ENCODE measurements at regions of chr12 and their contacts with region 1.

Region 1: GRCh38 chr12:92078167-92079053 is 67.2 kb downstream of the BTG1 start:
- DNase-seq: no peak
- H3K4me3 Mint-ChIP-seq: no peak overlapping the region
- H3K27ac Mint-ChIP-seq: peak overlapping the region; percentile 76
- H3K4me1 Mint-ChIP-seq: peaks cover 50% of the 10 kb centered on the region
- H3K27me3 Mint-ChIP-seq: no peaks in the 10 kb centered on the region

Region 2: GRCh38 chr12:91883781-91884180 is 194.6 kb before region 1 on chr12:
- intact Hi-C with region 1: no loop called
- DNase-seq: no peak
- H3K4me3 Mint-ChIP-seq: no peak overlapping the region
- H3K27ac Mint-ChIP-seq: no peak overlapping the region
- H3K4me1 Mint-ChIP-seq: peaks cover 23% of the 10 kb centered on the region
- H3K27me3 Mint-ChIP-seq: peaks cover 2% of the 10 kb centered on the region

Region 3: GRCh38 chr12:92034858-92035401 is 43.5 kb before region 1 on chr12:
- intact Hi-C with region 1: loop called (anchors 5 kb)
- DNase-seq: peak; percentile 35
- H3K4me3 Mint-ChIP-seq: peak overlapping the region; percentile 82
- H3K27ac Mint-ChIP-seq: peak overlapping the region; percentile 90
- H3K4me1 Mint-ChIP-seq: peaks cover 69% of the 10 kb centered on the region
- H3K27me3 Mint-ChIP-seq: no peaks in the 10 kb centered on the region

Region 4: GRCh38 chr12:92059976-92060375 is 18.4 kb before region 1 on chr12:
- intact Hi-C with region 1: loop called (anchors 1 kb)
- DNase-seq: no peak
- H3K4me3 Mint-ChIP-seq: no peak overlapping the region
- H3K27ac Mint-ChIP-seq: no peak overlapping the region
- H3K4me1 Mint-ChIP-seq: peaks cover 73% of the 10 kb centered on the region
- H3K27me3 Mint-ChIP-seq: no peaks in the 10 kb centered on the region

Region 5: DNA sequence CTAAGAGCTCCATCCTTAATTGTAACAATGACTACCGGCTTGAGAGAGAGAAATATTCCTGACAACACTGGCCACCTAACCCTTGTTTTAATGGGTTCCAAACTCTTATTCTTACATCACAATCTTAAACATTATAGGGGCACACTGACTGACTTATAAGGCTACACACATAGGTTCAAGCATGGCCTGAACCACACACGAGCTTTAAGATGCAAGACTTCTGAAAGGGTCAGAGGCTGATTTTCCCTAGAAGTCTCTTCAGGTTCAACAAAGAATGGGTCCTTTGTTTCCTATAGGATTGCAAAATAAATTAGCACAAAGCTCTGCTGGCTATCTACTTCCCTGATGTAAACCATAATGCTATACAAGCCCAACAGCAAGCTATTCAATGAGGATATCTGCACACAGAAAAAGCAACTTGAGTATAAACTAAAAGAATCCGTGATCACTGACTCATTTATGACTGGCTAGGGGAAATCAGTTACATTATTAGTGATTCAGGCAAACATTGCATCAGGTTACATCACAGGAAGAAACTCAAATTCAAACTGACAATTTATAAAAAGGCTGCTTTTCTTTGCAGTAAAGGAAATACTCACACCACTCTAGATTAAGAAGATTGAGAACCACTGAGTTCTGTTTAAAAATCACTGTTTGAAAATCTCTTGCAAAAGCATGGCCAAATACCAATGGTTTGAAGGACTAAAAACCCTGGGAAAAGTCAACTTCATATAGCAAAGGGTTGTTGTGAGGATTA is 58.7 kb after region 1 on chr12:
- intact Hi-C with region 1: loop called (anchors 1 kb)
- DNase-seq: no peak
- H3K4me3 Mint-ChIP-seq: peak overlapping the region; percentile 98
- H3K27ac Mint-ChIP-seq: peak overlapping the region; percentile 87
- H3K4me1 Mint-ChIP-seq: peaks cover 78% of the 10 kb centered on the region
- H3K27me3 Mint-ChIP-seq: no peaks in the 10 kb centered on the region